CD4-positive, alpha-beta T cell (primary cell): ENCODE measurements at regions of chr2 and their contacts with region 1.

Region 1: DNA sequence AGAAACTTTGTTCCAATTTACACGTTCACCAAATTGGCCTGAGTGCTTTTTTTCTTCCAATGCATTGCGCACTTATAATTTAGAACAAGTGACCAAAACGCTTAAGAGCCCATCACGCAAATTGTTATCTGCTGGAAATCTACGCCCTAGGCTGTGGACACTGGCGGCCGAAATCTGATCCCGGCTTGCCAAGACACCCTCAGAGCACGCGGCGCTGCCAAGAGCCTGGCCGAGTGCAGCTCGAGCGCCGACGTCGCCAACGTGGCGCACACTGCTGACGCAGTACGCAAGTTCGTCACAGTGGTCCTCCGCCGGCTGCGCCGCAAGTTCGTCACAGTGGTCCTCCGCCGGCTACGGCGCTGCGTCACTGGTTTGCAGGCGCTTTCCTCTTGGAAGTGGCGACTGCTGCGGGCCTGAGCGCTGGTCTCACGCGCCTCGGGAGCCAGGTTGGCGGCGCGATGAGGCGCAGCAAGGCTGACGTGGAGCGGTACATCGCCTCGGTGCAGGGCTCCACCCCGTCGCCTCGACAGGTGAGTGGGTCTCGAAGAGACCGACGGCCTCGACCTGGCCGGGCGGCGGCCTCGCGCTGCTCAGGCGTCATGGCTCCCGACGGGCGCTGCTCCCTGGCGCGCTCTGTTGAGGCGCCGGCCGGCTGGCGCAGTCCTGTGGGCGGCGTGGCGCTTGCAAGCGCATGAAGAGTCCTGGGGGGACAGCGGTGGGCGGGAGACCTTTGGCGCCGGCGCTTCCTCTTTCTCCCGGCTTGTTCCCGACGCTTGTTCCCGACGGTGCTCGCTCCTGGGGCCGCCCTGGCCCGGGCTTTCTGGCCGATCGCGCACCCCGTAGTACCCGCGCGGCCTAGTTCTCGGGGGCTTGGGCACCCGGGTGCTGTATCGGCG is at the start of gene RANBP2:
- DNase-seq: peak; percentile 84 to 99 (median 92)
- ATAC-seq: peak; percentile 88
- H3K4me3 ChIP-seq: peak within 1 kb of the TSS; percentile 69
- H3K4me3 Mint-ChIP-seq: peak within 1 kb of the TSS; percentile 98
- H3K27ac ChIP-seq: peak within 1 kb of the TSS; percentile 87 to 88
- H3K27ac Mint-ChIP-seq: peak within 1 kb of the TSS; percentile 98
- H3K4me1 ChIP-seq: peaks cover 22% of the 10 kb centered on the region
- H3K4me1 Mint-ChIP-seq: peaks cover 26% of the 10 kb centered on the region
- H3K27me3 ChIP-seq: no peaks in the 10 kb centered on the region
- H3K27me3 Mint-ChIP-seq: no peaks in the 10 kb centered on the region
- CTCF ChIP-seq: no peak
- total RNA-seq, gene RANBP2: 182 to 186 TPM

Region 2: DNA sequence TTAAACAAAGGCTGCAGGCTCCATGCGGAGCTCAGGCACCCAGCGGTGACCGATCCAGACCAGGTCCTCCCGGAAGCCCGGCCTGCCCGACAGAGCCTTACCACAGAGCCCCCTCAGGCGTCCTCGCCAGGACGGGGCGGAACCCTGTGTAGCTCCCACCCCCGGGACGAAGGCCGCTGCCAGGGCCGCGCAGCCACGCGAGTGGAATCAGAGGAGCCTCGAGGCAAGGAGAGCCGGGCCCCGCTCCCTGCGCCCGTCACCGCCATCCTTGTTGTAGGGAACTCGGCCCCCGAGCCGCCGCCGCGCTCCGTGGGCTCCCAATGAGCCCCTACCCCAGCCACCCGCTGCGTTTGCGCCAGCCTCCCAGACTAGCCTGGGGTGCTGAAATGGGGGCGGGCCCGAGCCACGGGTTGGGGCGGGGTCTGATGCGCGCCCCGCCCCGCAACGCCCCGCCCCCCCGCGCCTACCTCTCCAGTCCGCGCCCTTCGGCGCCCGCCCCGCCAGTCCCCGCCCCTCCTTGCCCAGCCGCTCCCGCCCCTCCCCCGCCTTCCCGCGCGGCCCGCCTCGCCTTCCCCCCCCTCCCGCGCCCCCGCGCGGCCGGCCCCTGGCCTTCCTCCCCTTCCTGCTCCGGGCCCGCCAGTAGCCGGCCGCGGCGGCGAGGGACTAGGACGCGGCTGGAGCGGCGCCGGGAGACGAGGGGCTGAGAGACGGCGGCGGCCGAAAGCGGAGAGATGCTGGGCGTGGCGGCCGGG is 185.4 kb before region 1 on chr2 and contains the start of gene LIMS1:
- CTCF ChIA-PET with region 1: no interaction called
- POLR2A ChIA-PET with region 1: interaction called, 5 read pairs
- intact Hi-C with region 1: loop called in 1 of 2 experiments (anchors 2 kb)
- DNase-seq: peak; percentile 76 to 93 (median 86)
- ATAC-seq: peak; percentile 93
- H3K4me3 ChIP-seq: peak within 1 kb of the TSS; percentile 91
- H3K4me3 Mint-ChIP-seq: peak within 1 kb of the TSS; percentile 99
- H3K27ac ChIP-seq: peak within 1 kb of the TSS in 1 of 2 donors; percentile 50
- H3K27ac Mint-ChIP-seq: peak within 1 kb of the TSS; percentile 86
- H3K4me1 ChIP-seq: peaks cover 25% of the 10 kb centered on the region
- H3K4me1 Mint-ChIP-seq: peaks cover 41% of the 10 kb centered on the region
- H3K27me3 ChIP-seq: no peaks in the 10 kb centered on the region
- H3K27me3 Mint-ChIP-seq: no peaks in the 10 kb centered on the region
- CTCF ChIP-seq: no peak
- total RNA-seq, gene LIMS1: 18.5 to 21.3 TPM

Region 3: DNA sequence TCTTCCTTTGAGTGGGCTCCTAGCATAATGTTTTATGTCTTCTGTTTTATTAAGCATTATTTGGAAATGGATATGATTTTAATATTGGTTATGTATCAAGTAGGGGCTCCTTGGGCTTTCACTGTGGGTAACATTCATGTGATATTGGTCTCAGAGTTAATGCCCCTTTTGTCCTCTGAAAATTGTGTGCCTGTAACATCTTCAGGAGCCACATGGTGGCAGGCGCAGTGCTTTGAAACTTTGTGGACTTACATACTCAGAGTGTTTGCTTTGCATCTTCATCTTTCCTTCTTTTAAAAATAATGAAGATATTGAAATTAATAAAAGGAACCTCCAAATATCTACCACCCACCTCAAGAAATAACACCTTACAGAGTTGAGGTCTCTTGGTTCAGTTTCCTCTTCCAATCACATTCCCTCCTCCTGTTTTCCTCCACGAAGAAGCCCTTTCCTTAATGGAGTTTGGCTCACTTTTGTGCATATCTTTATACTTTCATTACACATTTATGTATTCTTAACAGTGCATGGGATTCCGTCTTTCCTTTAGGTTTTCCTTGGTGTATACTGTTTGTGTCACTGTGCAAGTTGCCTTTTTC is 111.6 kb before region 1 on chr2:
- CTCF ChIA-PET with region 1: no interaction called
- POLR2A ChIA-PET with region 1: no interaction called
- intact Hi-C with region 1: loop called (anchors 5 kb)
- DNase-seq: peak; percentile 30 to 80 (median 54)
- ATAC-seq: peak; percentile 54
- H3K4me3 ChIP-seq: no peak overlapping the region
- H3K4me3 Mint-ChIP-seq: no peak overlapping the region
- H3K27ac ChIP-seq: no peak overlapping the region
- H3K27ac Mint-ChIP-seq: no peak overlapping the region
- H3K4me1 ChIP-seq: peaks cover 32% of the 10 kb centered on the region
- H3K4me1 Mint-ChIP-seq: peaks cover 44% of the 10 kb centered on the region
- H3K27me3 ChIP-seq: no peaks in the 10 kb centered on the region
- H3K27me3 Mint-ChIP-seq: no peaks in the 10 kb centered on the region
- CTCF ChIP-seq: peak; percentile 81

Region 4: GRCh38 chr2:108691447-108691846 is 27.9 kb before region 1 on chr2:
- CTCF ChIA-PET with region 1: no interaction called
- POLR2A ChIA-PET with region 1: no interaction called
- intact Hi-C with region 1: no loop called
- DNase-seq: no peak
- ATAC-seq: no peak
- H3K4me3 ChIP-seq: no peak overlapping the region
- H3K4me3 Mint-ChIP-seq: no peak overlapping the region
- H3K27ac ChIP-seq: no peak overlapping the region
- H3K27ac Mint-ChIP-seq: no peak overlapping the region
- H3K4me1 ChIP-seq: no peaks in the 10 kb centered on the region
- H3K4me1 Mint-ChIP-seq: no peaks in the 10 kb centered on the region
- H3K27me3 ChIP-seq: no peaks in the 10 kb centered on the region
- H3K27me3 Mint-ChIP-seq: no peaks in the 10 kb centered on the region
- CTCF ChIP-seq: no peak

Region 5: DNA sequence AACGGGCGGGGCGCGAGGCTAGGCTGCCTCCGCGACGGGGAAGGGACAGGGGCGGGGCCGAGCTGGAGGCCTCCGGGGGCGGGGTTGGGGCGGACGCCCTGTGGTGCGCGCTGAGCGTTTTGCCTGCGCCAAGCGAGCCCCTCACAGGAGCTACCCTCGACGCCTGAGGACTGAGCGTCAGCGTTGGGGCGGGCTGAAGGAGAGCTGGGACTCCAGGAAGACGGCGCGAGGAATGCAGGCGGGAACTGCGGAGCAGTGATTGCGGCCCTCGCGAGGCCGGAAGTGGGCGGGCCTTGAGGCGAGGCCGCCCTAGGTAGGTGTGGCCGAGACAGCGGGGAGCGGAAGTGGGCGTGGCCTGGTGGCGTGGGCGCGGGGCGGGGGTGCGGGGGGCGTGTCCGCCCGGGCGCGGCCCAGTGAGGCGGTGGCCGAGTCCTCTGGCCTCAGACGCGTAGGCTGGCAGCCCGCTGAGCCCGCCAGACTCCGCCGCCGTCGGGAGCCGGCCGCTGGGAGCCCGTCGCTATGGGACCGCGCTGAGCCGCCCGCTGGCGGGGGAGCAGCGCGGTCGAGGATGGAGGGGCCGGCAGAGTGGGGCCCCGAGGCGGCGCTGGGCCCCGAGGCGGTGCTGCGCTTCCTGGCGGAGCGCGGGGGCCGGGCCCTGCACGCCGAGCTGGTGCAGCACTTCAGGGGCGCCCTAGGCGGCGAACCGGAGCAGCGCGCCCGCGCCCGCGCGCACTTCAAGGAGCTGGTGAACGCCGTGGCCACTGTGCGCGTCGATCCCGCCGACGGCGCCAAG is 894.7 kb after region 1 on chr2 and contains the starts of genes SEPTIN10 and SOWAHC:
- CTCF ChIA-PET with region 1: no interaction called
- POLR2A ChIA-PET with region 1: no interaction called
- intact Hi-C with region 1: loop called in 1 of 2 experiments (anchors 10 kb)
- DNase-seq: peak; percentile 57 to 88 (median 74)
- ATAC-seq: peak; percentile 89
- H3K4me3 ChIP-seq: peak within 1 kb of the TSS; percentile 50
- H3K4me3 Mint-ChIP-seq: peak within 1 kb of the TSS; percentile 94
- H3K27ac ChIP-seq: no peak within 1 kb of the TSS
- H3K27ac Mint-ChIP-seq: peak within 1 kb of the TSS; percentile 79
- H3K4me1 ChIP-seq: peaks cover 14% of the 10 kb centered on the region
- H3K4me1 Mint-ChIP-seq: peaks cover 27% of the 10 kb centered on the region
- H3K27me3 ChIP-seq: peaks cover 29 to 74% of the 10 kb centered on the region in 2 experiments
- H3K27me3 Mint-ChIP-seq: peaks cover 84% of the 10 kb centered on the region
- CTCF ChIP-seq: no peak
- total RNA-seq, gene SEPTIN10: 2.0 to 2.6 TPM
- total RNA-seq, gene SOWAHC: 1.3 to 1.6 TPM